ENCODE measurements at regions of chr12 and their contacts with region 1.

Region 1: DNA sequence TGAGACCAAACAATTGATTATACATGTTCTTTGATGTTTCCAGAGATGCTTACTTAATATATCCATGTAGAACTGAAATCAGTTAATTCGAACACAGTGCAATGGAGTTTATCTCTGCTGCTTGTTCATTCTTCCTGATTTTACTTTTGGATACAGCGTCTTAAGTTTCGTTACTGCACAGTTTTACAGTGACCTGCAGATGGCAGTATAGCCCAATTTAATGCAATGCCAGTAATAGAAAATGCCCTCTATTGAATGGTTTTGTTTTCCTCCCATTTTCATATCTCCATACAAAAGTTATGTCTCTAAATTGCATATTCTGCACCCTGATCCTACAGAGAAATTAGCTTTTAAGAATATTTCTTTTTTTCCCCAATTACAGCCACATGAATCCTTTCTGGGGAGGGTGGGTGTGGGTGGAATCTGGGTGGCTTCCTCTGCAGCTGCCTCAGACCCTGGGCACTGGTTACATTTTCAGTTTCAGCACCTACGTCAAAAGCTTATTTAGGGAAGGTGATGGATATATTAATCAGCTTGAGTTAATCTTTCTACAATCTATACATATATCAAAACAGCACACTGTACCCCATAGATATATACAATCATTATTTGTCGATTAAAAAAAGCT is 101.1 kb upstream of the DCD start:
- DNase-seq: no peak
- H3K4me3 ChIP-seq: no peak overlapping the region
- H3K27ac ChIP-seq: no peak overlapping the region
- H3K4me1 ChIP-seq: no peaks in the 10 kb centered on the region
- H3K27me3 ChIP-seq: no peaks in the 10 kb centered on the region
- CTCF ChIP-seq: peak; percentile 57 to 74 (median 62)
- POLR2A ChIP-seq: no peak

Region 2: DNA sequence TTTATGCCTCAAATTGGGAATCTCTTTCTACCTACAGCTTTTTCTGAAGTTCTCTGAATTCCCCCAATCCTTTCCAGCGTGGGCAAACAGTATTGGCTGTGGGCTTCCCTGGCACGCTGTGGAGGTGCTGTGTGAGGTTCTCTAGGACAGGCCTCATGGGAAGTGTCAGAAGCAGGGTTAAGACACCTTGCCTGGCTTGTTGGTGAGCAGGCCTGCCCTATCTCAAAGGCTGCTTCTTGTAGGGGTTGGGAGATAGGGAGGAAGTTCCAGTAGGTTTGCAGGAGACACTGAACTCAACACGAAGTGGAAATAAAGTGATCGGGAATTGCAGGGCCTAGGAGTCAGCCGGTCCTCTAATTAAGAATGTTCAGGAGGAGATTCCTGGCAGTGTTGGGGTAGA is 71.2 kb before region 1 on chr12:
- intact Hi-C with region 1: no loop called
- DNase-seq: no peak
- H3K4me3 ChIP-seq: no peak overlapping the region
- H3K27ac ChIP-seq: no peak overlapping the region
- H3K4me1 ChIP-seq: no peaks in the 10 kb centered on the region
- H3K27me3 ChIP-seq: peaks cover 0 to 32% (median 0%) of the 10 kb centered on the region in 4 donors
- CTCF ChIP-seq: no peak
- POLR2A ChIP-seq: no peak

Region 3: DNA sequence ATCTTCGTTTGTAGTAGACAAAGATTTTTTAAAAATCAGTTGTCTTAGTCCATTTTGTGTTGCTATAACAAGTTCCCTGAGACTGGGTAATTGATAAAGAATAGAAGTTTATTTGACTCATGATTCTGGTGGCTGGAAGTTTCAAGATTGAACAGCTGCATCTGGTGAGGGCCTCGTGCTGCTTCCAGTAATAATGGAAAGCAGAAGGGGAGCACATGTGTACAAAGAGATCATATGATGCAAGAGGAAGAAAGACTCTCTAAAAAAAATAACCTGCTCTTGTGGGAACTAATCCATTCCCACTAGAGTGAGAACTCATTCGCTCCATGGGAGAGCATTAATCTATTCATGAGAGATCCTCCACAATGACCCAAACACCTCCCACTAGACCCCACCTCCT is 129.8 kb after region 1 on chr12:
- intact Hi-C with region 1: no loop called
- DNase-seq: no peak
- H3K4me3 ChIP-seq: no peak overlapping the region
- H3K27ac ChIP-seq: no peak overlapping the region
- H3K4me1 ChIP-seq: no peaks in the 10 kb centered on the region
- H3K27me3 ChIP-seq: no peaks in the 10 kb centered on the region
- CTCF ChIP-seq: no peak
- POLR2A ChIP-seq: no peak

Region 4: DNA sequence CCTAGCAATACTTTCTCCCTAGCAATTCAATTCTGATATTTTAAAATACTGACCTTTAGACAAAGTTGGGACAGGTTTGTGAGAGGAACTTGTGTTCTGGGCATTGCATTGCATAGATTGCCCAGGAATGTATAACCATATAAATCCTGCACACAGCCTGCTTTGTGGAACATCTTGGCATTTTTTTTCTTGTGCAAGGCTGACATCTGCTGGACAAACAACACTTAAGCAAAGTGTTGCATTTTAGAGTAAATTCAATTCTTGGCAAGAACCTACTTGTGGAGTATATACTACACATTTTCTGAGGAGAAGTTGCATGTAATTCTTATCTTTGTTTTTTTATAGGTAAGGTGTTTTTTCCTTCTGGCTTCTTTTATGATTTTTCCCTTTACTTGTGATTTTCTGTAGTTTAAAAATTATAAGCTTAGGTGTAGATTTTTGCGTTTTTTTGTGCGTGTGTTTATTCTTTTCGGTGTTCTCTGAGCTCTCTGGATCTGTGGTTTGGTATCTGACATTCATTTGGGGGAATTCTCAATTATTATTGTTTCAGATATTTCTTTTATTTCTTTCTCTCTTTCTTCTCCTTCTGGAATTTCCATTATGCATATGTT is 208.8 kb after region 1 on chr12:
- intact Hi-C with region 1: loop called (anchors 5 kb)
- DNase-seq: no peak
- H3K4me3 ChIP-seq: no peak overlapping the region
- H3K27ac ChIP-seq: no peak overlapping the region
- H3K4me1 ChIP-seq: no peaks in the 10 kb centered on the region
- H3K27me3 ChIP-seq: peaks cover 0 to 8% (median 0%) of the 10 kb centered on the region in 4 donors
- CTCF ChIP-seq: peak in 5 of 6 experiments; percentile 61 to 80 (median 67)
- POLR2A ChIP-seq: no peak